ENCODE measurements at regions of chr6 and their contacts with region 1.

Region 1: GRCh38 chr6:118800394-118801071 is 93.4 kb upstream of the ASF1A start:
- DNase-seq: peak; percentile 89
- H3K4me3 Mint-ChIP-seq: peak overlapping the region; percentile 28
- H3K27ac Mint-ChIP-seq: peak overlapping the region; percentile 16
- H3K4me1 Mint-ChIP-seq: peaks cover 28% of the 10 kb centered on the region
- H3K27me3 Mint-ChIP-seq: no peaks in the 10 kb centered on the region

Region 2: DNA sequence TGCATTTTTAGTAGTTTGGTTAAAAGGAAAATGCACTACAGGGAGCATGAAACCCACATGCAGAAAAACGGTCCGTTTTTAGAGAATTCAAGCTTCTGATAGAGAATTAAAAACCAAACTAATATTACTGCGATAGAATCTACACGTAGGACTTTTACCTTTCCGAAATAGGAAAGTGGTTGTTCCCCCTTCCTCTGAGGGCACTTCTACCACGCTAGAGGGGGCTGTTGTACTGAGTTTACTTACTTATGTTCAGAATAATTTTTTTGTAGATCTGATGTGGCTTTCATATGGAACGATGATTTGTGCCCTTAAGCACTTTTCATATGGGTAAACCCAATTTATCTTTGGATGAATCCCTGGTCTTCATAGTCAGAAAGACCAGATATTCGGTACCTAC is 516.8 kb before region 1 on chr6:
- CTCF ChIA-PET with region 1: interaction called, 3 read pairs
- POLR2A ChIA-PET with region 1: no interaction called
- intact Hi-C with region 1: loop called (anchors 2 kb)
- DNase-seq: peak; percentile 39
- H3K4me3 Mint-ChIP-seq: no peak overlapping the region
- H3K27ac Mint-ChIP-seq: no peak overlapping the region
- H3K4me1 Mint-ChIP-seq: no peaks in the 10 kb centered on the region
- H3K27me3 Mint-ChIP-seq: no peaks in the 10 kb centered on the region

Region 3: DNA sequence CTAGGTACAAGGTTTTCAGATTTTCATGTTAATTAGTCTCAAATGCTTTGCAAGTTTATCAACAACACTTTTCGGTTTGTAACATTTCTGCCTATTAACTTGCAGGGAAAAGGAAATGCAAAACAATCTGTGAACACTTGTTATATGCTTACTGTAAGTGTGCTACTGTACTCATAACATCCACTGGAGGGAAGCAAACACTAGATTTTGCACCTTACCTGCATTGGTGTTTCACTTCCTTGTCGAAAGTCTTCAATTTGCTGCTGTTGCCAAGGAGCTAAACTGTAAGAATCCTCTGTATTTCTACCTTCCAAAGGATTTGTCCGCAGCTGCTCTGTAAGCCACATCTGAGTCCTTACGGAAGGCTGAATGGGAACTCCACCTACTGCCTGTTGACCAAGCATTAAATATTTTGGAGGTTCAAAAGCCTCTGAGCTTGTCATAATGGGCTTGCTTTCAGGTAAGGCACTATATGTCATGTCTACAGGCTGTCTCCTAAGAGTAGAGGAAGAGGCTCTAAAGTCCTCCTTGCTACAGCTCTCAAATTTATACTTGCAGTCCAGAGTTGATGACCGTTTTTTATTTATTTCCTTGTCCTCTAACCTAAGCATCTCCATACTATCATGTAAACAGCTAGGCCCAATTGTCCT is 235.1 kb before region 1 on chr6:
- CTCF ChIA-PET with region 1: interaction called, 22 read pairs
- POLR2A ChIA-PET with region 1: no interaction called
- intact Hi-C with region 1: loop called (anchors 1 kb)
- DNase-seq: no peak
- H3K4me3 Mint-ChIP-seq: no peak overlapping the region
- H3K27ac Mint-ChIP-seq: peak overlapping the region; percentile 11
- H3K4me1 Mint-ChIP-seq: peaks cover 17% of the 10 kb centered on the region
- H3K27me3 Mint-ChIP-seq: no peaks in the 10 kb centered on the region

Region 4: DNA sequence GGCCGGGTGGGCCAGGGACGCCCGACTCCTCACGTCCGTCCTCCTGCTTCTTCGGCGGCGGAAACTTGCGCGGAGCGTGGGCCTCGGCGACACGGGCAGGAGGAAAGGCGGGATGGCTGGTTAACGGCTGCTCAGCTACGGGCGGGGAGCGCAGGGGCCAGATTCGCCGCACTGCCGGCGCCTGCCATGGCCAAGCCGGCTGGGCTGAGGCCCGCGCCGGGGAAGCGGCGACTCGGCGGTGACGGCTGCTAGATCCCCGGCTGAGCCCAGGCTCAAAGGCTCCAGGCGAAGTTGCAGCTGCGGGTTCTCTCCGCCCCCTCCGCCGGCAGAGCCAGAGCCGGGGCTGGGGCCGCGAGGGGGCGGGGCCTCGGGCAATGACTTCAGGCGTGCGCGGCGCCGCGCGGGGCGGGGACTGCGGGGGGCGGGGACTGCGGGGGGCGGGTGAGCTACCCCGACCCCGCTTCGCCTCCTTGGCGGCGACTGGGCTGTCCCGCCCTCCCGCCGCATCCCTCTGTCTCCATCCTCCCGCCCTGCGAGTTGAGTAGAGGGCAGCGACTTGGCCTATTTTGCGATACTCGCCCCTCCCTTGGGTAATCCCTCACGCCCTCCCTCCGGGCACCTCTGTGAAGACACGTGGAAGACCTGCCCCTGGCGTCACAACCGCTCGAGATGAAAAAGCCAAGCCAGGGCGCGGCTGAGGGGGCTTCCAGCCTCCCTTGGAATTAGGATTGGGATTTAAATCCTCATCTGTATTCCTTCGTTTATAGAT is 149.1 kb before region 1 on chr6 and contains the start of gene CEP85L:
- CTCF ChIA-PET with region 1: interaction called, 5 read pairs
- POLR2A ChIA-PET with region 1: no interaction called
- intact Hi-C with region 1: loop called (anchors 2 kb)
- DNase-seq: peak; percentile 93
- H3K4me3 Mint-ChIP-seq: peak within 1 kb of the TSS; percentile 87
- H3K27ac Mint-ChIP-seq: peak within 1 kb of the TSS; percentile 93
- H3K4me1 Mint-ChIP-seq: peaks cover 53% of the 10 kb centered on the region
- H3K27me3 Mint-ChIP-seq: no peaks in the 10 kb centered on the region
- total RNA-seq, gene CEP85L: 21.1 to 23.3 TPM

Region 5: GRCh38 chr6:118697554-118697953 is 103.0 kb before region 1 on chr6:
- CTCF ChIA-PET with region 1: interaction called, 13 read pairs
- POLR2A ChIA-PET with region 1: no interaction called
- intact Hi-C with region 1: no loop called
- DNase-seq: no peak
- H3K4me3 Mint-ChIP-seq: no peak overlapping the region
- H3K27ac Mint-ChIP-seq: no peak overlapping the region
- H3K4me1 Mint-ChIP-seq: peaks cover 64% of the 10 kb centered on the region
- H3K27me3 Mint-ChIP-seq: no peaks in the 10 kb centered on the region

Region 6: GRCh38 chr6:118787724-118788423 is 12.7 kb before region 1 on chr6:
- CTCF ChIA-PET with region 1: interaction called, 23 read pairs
- POLR2A ChIA-PET with region 1: no interaction called
- intact Hi-C with region 1: loop called (anchors 1 kb)
- DNase-seq: peak; percentile 37
- H3K4me3 Mint-ChIP-seq: no peak overlapping the region
- H3K27ac Mint-ChIP-seq: peak overlapping the region; percentile 40
- H3K4me1 Mint-ChIP-seq: peaks cover 32% of the 10 kb centered on the region
- H3K27me3 Mint-ChIP-seq: no peaks in the 10 kb centered on the region

Region 7: GRCh38 chr6:118843685-118844390 is 43.3 kb after region 1 on chr6:
- CTCF ChIA-PET with region 1: no interaction called
- POLR2A ChIA-PET with region 1: no interaction called
- intact Hi-C with region 1: loop called (anchors 2 kb)
- DNase-seq: no peak
- H3K4me3 Mint-ChIP-seq: peak overlapping the region; percentile 33
- H3K27ac Mint-ChIP-seq: peak overlapping the region; percentile 34
- H3K4me1 Mint-ChIP-seq: peaks cover 32% of the 10 kb centered on the region
- H3K27me3 Mint-ChIP-seq: no peaks in the 10 kb centered on the region

Region 8: GRCh38 chr6:119686644-119687043 is 886.1 kb after region 1 on chr6:
- CTCF ChIA-PET with region 1: no interaction called
- POLR2A ChIA-PET with region 1: no interaction called
- intact Hi-C with region 1: no loop called
- DNase-seq: no peak
- H3K4me3 Mint-ChIP-seq: no peak overlapping the region
- H3K27ac Mint-ChIP-seq: no peak overlapping the region
- H3K4me1 Mint-ChIP-seq: no peaks in the 10 kb centered on the region
- H3K27me3 Mint-ChIP-seq: no peaks in the 10 kb centered on the region